Transverse colon (tissue), 4 donors: ENCODE measurements at regions of chr11 and their contacts with region 1.

Region 1: DNA sequence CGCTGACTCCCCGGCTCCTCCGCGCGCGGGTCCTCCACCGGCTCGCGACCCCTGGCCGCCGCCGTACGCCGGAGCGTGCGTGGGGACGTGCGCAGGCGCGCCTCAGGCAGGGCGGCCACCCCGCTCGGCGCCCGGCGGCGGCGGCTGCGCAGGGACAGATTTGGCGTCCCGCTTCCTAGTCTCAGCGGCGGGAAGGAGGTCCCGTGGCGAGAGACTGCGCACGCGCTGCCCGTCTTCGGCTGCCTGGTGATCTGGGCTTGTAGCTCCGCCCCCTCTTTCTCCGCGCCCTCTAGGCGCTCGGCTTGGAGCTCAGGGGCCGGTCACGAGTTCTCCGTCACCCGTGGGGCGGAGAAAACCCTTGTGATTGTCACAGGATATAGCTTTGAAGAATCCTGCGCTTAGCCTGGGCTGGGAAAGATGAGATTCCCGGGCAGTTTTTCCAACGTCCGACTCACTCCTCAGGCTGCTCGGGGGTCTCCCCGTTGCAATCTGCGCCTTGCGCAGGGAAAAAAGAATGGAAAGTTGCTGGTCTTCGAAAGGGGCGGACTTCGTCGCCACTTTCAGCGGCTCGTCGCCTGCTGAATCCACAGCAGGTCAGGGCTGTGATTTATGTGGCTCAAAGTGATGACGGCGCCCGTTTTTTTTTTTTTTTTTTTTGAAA is at the start of gene PATL1:
- DNase-seq: peak; percentile 100
- H3K4me3 ChIP-seq: peak within 1 kb of the TSS; percentile 67 to 97 (median 69)
- H3K27ac ChIP-seq: peak within 1 kb of the TSS; percentile 95 to 99 (median 98)
- H3K4me1 ChIP-seq: peaks cover 6 to 35% (median 24%) of the 10 kb centered on the region in 4 donors
- H3K27me3 ChIP-seq: no peaks in the 10 kb centered on the region
- CTCF ChIP-seq: no peak
- EP300 ChIP-seq: no peak
- POLR2A ChIP-seq: peak; percentile 86
- total RNA-seq, gene PATL1: 13.5 to 93.9 (median 20.9) TPM

Region 2: DNA sequence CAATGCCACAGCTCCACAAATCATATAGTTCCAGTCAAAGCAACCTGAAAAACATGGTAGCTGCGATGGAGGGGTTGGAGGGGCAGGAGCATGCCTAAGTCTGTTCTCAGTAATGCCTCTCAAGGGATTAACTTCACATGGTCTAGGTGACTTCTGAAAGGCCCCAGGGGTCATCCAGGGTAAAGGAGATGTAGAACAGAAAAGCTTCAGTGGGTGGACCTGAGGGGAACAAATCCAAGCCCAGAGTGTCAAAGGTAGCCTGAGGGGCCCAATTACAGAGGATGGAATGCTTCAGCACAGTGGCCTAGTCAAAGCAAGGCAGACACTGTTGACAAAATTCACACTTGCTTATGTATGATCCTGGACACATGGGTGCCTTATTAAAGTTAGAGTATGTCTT is 134.4 kb before region 1 on chr11:
- in situ Hi-C with region 1: loop called in 2 of 4 experiments (anchors 10 kb)
- intact Hi-C with region 1: no loop called
- DNase-seq: no peak
- H3K4me3 ChIP-seq: no peak overlapping the region
- H3K27ac ChIP-seq: no peak overlapping the region
- H3K4me1 ChIP-seq: peaks cover 0 to 14% (median 0%) of the 10 kb centered on the region in 4 donors
- H3K27me3 ChIP-seq: no peaks in the 10 kb centered on the region
- CTCF ChIP-seq: no peak
- EP300 ChIP-seq: no peak
- POLR2A ChIP-seq: no peak

Region 3: GRCh38 chr11:59545179-59546020 is 123.7 kb before region 1 on chr11:
- in situ Hi-C with region 1: loop called in 1 of 4 experiments (anchors 10 kb)
- intact Hi-C with region 1: no loop called
- DNase-seq: no peak
- H3K4me3 ChIP-seq: no peak overlapping the region
- H3K27ac ChIP-seq: no peak overlapping the region
- H3K4me1 ChIP-seq: peaks cover 0 to 6% (median 3%) of the 10 kb centered on the region in 4 donors
- H3K27me3 ChIP-seq: no peaks in the 10 kb centered on the region
- CTCF ChIP-seq: no peak
- EP300 ChIP-seq: no peak
- POLR2A ChIP-seq: no peak

Region 4: GRCh38 chr11:59615637-59616395 is 53.3 kb before region 1 on chr11 and contains the start of gene OSBP:
- in situ Hi-C with region 1: loop called in 1 of 4 experiments (anchors 5 kb)
- intact Hi-C with region 1: loop called (anchors 5 kb)
- DNase-seq: peak; percentile 99
- H3K4me3 ChIP-seq: peak within 1 kb of the TSS; percentile 78 to 93 (median 87)
- H3K27ac ChIP-seq: peak within 1 kb of the TSS; percentile 95 to 99 (median 98)
- H3K4me1 ChIP-seq: peaks cover 33 to 44% (median 39%) of the 10 kb centered on the region in 4 donors
- H3K27me3 ChIP-seq: no peaks in the 10 kb centered on the region
- CTCF ChIP-seq: peak in 2 of 5 experiments; percentile 14 to 51
- EP300 ChIP-seq: no peak
- POLR2A ChIP-seq: peak; percentile 85
- total RNA-seq, gene OSBP: 27.7 to 59.1 (median 47.2) TPM

Region 5: DNA sequence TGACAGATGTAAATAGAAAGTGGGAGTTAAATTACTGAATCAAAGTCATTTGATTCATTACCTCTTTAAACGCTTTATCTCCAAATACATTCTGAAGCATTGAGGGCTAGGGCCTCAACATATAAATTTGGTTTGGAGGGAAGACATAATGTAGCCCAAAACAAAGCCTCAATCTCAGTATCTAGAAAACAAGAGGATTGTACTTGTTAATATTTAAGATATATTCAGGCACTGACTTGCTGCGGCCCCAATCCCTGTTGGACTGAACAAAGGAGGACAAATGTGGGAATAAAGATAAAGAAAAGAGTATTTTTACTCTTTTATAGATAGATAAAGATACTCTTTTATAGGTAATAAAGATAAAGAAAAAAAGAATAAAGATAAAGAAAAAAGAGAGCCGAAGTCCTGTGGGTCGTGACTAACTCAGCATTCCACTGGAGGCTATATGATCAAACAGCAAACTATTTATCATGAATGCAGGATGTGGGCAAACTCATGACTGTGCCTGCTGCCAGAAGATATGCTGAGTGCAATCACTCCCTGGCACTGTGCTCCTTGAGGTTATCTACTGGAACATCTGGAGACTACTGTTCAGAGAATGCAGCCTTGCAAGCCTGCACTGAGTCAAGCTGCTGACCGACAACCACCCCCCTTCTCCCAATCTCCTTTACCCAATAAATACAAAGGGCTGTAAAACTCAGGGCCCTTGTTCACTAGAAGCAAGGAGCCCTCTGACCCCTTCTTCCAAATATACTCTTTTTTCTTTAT is 37.6 kb after region 1 on chr11:
- in situ Hi-C with region 1: no loop called
- intact Hi-C with region 1: no loop called
- DNase-seq: peak; percentile 14
- H3K4me3 ChIP-seq: no peak overlapping the region
- H3K27ac ChIP-seq: no peak overlapping the region
- H3K4me1 ChIP-seq: no peaks in the 10 kb centered on the region
- H3K27me3 ChIP-seq: no peaks in the 10 kb centered on the region
- CTCF ChIP-seq: no peak
- EP300 ChIP-seq: no peak
- POLR2A ChIP-seq: no peak

Region 6: GRCh38 chr11:59857444-59858434 is 188.7 kb after region 1 on chr11:
- in situ Hi-C with region 1: no loop called
- intact Hi-C with region 1: no loop called
- DNase-seq: no peak
- H3K4me3 ChIP-seq: no peak overlapping the region
- H3K27ac ChIP-seq: no peak overlapping the region
- H3K4me1 ChIP-seq: peaks cover 0 to 4% (median 0%) of the 10 kb centered on the region in 4 donors
- H3K27me3 ChIP-seq: no peaks in the 10 kb centered on the region
- CTCF ChIP-seq: no peak
- EP300 ChIP-seq: no peak
- POLR2A ChIP-seq: no peak